ENCODE measurements at regions of chr1 and their contacts with region 1.

Region 1: DNA sequence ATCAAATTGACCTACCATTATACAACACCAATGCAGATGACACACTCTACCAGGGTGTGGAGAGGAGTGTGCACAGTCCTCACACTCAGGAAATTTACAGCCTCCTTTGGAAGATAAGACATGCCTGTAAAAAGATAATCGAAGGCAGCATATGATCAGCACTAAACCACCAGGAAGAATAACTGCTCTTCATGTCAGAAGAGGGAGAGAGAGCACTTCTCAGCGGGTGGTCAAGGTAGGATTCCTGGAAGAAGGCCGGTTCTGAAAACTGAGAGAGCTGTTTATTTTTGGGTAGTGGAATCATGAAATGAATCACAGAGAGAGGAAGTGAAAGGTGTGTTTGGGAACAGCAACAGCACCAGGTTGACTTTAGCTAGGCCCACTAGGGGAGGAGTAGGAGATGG is 14.0 kb upstream of the ZNF697 start:
- DNase-seq: no peak
- H3K4me3 Mint-ChIP-seq: no peak overlapping the region
- H3K27ac Mint-ChIP-seq: peak overlapping the region; percentile 12
- H3K4me1 Mint-ChIP-seq: peaks cover 49% of the 10 kb centered on the region
- H3K27me3 Mint-ChIP-seq: peaks cover 3% of the 10 kb centered on the region

Region 2: DNA sequence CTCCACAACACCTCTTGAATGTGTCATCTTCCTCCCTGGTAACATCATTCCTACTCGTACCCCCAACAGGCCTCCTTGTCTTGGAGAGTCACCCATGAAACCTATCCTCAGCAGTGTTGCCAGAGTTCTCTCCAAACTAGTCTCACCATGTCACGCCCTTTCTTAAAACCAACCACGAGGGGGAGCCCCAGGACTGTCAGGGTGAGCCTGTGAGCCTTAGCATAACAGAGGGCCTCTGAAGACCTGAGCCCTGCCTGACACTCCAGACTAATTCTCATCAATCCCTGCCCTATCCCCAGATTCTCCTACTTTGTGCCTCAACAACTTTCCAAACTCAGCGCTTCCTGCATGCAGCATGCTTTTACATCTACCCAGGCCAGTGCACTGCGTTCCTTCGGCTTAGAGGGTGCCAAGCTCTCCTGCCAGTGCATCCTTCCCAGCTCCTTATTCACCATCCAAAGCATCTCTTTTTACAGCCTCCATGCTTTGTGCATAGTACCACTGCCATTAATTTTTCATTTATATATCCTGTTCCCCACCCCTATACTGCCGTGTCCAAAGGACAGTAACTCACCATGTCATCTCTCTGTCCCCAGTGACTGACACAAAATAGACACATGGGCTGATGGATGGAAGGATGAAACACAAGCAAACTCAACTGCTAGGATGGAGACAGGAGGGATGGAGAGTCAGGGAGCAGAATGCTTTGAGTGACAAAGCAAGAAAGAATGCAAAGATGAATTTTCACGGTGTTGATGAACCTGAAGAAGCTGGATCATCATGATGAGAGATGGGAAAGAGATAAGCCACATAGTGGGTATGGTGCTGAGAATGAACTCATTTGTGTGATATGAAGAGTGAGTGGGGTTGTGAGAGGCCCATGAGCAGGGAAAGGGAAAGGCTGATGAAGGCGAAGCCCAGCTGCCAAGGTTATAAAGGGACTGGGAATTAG is 48.0 kb before region 1 on chr1:
- intact Hi-C with region 1: loop called (anchors 1 kb)
- DNase-seq: peak; percentile 70
- H3K4me3 Mint-ChIP-seq: no peak overlapping the region
- H3K27ac Mint-ChIP-seq: no peak overlapping the region
- H3K4me1 Mint-ChIP-seq: peaks cover 17% of the 10 kb centered on the region
- H3K27me3 Mint-ChIP-seq: peaks cover 2% of the 10 kb centered on the region

Region 3: DNA sequence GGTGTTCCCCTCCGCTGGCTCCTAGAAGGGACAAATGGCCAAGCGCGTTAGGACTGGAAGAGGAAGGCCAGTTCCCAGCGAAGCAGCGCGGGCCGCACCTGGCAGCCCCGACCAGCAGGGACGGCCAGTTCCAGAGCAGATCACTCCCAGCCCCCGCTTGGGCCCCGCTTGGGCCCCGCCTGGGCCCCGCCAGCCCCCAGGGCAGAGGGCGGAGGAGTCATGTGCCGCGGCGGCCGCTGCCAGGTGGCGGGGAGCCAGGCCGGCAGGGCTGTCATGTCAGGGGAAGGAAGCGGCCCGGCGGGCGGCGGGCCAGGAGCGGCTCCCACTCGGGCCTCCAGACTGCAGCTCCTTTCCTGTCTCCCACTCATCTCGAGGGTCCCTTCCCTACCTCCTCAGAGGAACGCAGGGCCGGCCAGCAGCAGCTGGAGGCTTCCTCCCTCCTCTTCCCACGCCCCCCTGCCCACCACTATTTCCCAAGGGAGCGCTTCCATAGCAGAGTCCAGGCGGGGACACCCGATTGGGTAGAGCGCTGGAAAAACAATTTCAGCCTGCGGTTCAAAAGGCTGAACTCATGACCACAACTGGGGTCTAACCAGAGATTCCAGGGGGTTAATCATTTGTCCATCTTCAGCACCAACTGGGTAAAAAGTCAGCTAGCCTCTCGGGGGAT is 30.5 kb before region 1 on chr1:
- intact Hi-C with region 1: no loop called
- DNase-seq: no peak
- H3K4me3 Mint-ChIP-seq: no peak overlapping the region
- H3K27ac Mint-ChIP-seq: no peak overlapping the region
- H3K4me1 Mint-ChIP-seq: peaks cover 22% of the 10 kb centered on the region
- H3K27me3 Mint-ChIP-seq: peaks cover 33% of the 10 kb centered on the region

Region 4: DNA sequence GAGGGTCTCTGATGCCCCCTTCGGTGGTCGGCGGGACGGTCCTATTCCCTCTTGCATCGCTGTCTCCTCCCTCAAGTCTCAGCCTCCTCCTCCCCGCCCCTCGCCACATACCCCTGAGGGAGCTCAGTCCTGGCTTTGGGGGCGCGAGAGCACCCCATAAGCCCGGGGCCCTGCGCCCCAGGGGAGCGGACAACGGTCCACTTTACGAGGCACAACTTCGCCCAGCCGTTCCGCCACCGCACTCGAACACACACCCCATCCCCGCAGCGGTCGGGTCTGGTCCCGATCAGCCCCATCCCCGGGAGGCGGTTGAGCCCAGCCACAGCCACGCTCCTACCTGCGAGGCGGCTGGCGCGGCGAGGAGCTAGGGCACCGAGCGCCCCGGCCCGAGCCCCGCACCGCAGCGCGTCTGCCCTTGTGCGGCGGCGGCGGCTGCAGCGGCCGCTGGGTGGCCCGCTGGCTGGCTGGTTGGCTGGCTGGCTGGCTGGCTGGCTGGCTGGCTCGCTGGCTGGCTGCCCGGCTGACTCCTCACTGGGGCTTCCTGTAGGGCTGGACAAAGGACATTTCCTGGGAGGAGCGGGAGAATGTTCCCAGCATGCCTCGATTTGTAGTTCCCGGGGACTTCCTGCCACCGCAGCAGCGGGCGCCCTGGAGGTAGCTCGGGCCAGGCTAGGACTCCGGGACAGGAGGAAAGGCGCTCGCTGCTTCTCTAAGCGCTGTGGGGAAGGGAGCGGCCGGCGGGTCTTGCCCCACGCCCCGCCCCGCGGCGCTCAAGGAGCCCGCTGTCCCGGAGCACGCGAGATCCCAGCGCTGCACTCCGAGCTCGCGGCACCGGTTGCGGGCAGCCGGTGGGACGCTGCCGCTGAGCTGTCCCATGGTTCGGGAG is 14.1 kb before region 1 on chr1 and contains the start of gene ZNF697:
- intact Hi-C with region 1: loop called (anchors 2 kb)
- DNase-seq: peak; percentile 50
- H3K4me3 Mint-ChIP-seq: peak within 1 kb of the TSS; percentile 92
- H3K27ac Mint-ChIP-seq: peak within 1 kb of the TSS; percentile 69
- H3K4me1 Mint-ChIP-seq: peaks cover 56% of the 10 kb centered on the region
- H3K27me3 Mint-ChIP-seq: peaks cover 21% of the 10 kb centered on the region
- total RNA-seq, gene ZNF697: 12.6 and 13.0 TPM in 2 replicates

Region 5: GRCh38 chr1:119974013-119974412 is 312.0 kb after region 1 on chr1:
- intact Hi-C with region 1: no loop called
- DNase-seq: no peak
- H3K4me3 Mint-ChIP-seq: no peak overlapping the region
- H3K27ac Mint-ChIP-seq: no peak overlapping the region
- H3K4me1 Mint-ChIP-seq: peaks cover 19% of the 10 kb centered on the region
- H3K27me3 Mint-ChIP-seq: no peaks in the 10 kb centered on the region

Region 6: GRCh38 chr1:119987112-119987511 is 325.1 kb after region 1 on chr1:
- intact Hi-C with region 1: loop called (anchors 5 kb)
- DNase-seq: no peak
- H3K4me3 Mint-ChIP-seq: peak overlapping the region; percentile 53
- H3K27ac Mint-ChIP-seq: peak overlapping the region; percentile 87
- H3K4me1 Mint-ChIP-seq: peaks cover 48% of the 10 kb centered on the region
- H3K27me3 Mint-ChIP-seq: no peaks in the 10 kb centered on the region

Measured in activated T-helper 2 cell treated with anti-CD3 and anti-CD28 coated beads, Interferon-gamma antibody, Interleukin-2, Interleukin-4, amounts not matched to agents 10 μg/mL and 5 μg/mL and 100 μg/mL, durations not matched to agents 14 hours and 24 hours and 36 hours (primary cell).